HCT116 (cell line): ENCODE measurements at regions of chr5 and their contacts with region 1.

Region 1: DNA sequence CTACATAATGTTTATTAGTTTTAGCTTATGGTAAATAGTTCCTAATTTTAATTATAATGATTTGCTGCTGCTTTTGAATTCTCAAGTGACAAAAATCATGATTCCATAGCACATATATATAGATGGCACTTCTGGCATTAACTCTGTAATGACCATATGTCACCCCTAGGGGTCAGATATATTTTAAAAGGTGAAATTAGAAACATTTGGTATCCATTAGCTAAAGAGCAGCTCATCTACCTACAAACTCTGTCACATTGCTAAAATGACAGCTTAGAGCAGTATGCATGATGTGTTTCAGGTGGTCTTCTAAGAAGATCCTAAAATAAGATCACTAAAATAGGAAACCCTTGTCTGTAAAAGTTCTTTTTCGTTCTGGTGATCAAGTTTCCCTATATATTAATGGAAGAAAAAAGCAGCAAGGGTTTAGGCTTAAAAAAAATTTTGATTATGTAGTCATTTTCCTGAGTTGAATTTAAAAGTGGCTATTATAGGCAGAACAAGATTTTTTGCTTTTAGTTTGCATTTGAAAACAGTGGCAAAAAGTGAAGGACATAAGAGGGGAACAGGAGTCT is 157.7 kb upstream of the POU5F2 start:
- DNase-seq: no peak
- ATAC-seq: peak; percentile 69
- H3K4me3 ChIP-seq: no peak overlapping the region
- H3K27ac ChIP-seq: no peak overlapping the region
- H3K4me1 ChIP-seq: no peaks in the 10 kb centered on the region
- H3K27me3 ChIP-seq: no peaks in the 10 kb centered on the region
- CTCF ChIP-seq: peak; percentile 21 to 67 (median 42); a peak in 4 of 6 replicates
- POLR2A ChIP-seq: no peak
- RAD21 ChIP-seq: peak; percentile 27; the same call in 1 of the 2 replicates

Region 2: DNA sequence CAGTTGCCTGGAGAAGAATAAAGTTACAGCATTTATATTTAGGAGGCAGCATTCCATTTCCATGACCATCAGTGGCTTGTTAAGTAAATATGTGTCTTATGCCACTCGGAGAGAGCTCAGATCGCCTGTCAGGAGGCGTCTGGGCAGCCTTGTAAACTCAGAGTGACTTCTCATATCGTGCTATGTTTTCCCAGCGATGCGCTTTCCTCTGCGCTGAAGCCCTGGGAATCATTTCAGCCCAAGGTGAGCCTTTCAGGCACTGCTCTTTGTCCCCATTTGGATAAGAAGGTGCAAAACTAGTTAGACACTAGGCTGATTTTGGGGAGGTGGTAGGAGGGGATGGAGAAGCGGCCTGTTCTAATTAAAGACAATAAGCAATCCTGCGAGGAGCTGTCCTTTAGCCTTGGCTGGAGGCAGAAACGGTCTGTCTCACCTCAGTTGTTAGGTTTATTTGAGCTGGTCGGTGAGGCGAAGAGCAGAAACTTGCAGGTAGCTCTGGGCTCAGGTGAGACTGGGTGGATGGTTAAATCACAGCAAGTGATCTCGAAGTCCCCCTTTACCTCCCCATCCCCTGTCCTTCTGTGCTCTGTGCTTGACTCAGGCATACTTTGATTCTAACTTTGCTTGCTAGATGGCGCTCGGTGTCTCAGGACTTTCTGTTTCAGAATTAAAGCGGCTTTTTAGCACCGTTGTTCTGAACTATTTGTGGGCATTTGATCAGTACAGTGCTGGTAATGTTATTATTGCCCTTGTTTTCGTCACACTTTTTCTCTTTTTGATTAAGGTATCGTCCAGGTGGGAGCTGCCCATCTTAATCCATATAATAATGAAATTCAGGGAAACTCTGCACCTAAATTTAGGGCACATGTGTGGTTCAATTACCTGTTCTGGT is 291.5 kb before region 1 on chr5:
- CTCF ChIA-PET with region 1: no interaction called
- POLR2A ChIA-PET with region 1: no interaction called
- RAD21 ChIA-PET with region 1: no interaction called
- intact Hi-C with region 1: loop called (anchors 10 kb)
- DNase-seq: no peak
- ATAC-seq: peak; percentile 83
- H3K4me3 ChIP-seq: no peak overlapping the region
- H3K27ac ChIP-seq: no peak overlapping the region
- H3K4me1 ChIP-seq: peaks cover 14 to 18% of the 10 kb centered on the region in 2 experiments; a peak in 2 of 4 replicates
- H3K27me3 ChIP-seq: peaks cover 54% of the 10 kb centered on the region
- CTCF ChIP-seq: peak; percentile 55 to 78 (median 67)
- POLR2A ChIP-seq: no peak
- RAD21 ChIP-seq: peak; percentile 77

Region 3: GRCh38 chr5:93883459-93883858 is 15.7 kb before region 1 on chr5:
- CTCF ChIA-PET with region 1: interaction called, 16 read pairs
- POLR2A ChIA-PET with region 1: no interaction called
- RAD21 ChIA-PET with region 1: no interaction called
- intact Hi-C with region 1: no loop called
- DNase-seq: no peak
- ATAC-seq: no peak
- H3K4me3 ChIP-seq: no peak overlapping the region
- H3K27ac ChIP-seq: no peak overlapping the region
- H3K4me1 ChIP-seq: peaks cover 5 to 7% of the 10 kb centered on the region in 2 experiments; a peak in 3 of 4 replicates
- H3K27me3 ChIP-seq: no peaks in the 10 kb centered on the region
- CTCF ChIP-seq: no peak
- POLR2A ChIP-seq: no peak
- RAD21 ChIP-seq: no peak

Region 4: GRCh38 chr5:93909356-93909755 is 10.2 kb after region 1 on chr5:
- CTCF ChIA-PET with region 1: interaction called, 15 read pairs
- POLR2A ChIA-PET with region 1: no interaction called
- RAD21 ChIA-PET with region 1: no interaction called
- intact Hi-C with region 1: no loop called
- DNase-seq: no peak
- ATAC-seq: no peak
- H3K4me3 ChIP-seq: no peak overlapping the region
- H3K27ac ChIP-seq: no peak overlapping the region
- H3K4me1 ChIP-seq: no peaks in the 10 kb centered on the region
- H3K27me3 ChIP-seq: no peaks in the 10 kb centered on the region
- CTCF ChIP-seq: peak; percentile 7 to 32 (median 10); a peak in 2 of 6 replicates
- POLR2A ChIP-seq: no peak
- RAD21 ChIP-seq: peak; percentile 38; the same call in 1 of the 2 replicates

Region 5: GRCh38 chr5:94057217-94057616 is 158.1 kb after region 1 on chr5:
- CTCF ChIA-PET with region 1: no interaction called
- POLR2A ChIA-PET with region 1: no interaction called
- RAD21 ChIA-PET with region 1: no interaction called
- intact Hi-C with region 1: no loop called
- DNase-seq: no peak
- ATAC-seq: no peak
- H3K4me3 ChIP-seq: no peak overlapping the region
- H3K27ac ChIP-seq: no peak overlapping the region
- H3K4me1 ChIP-seq: no peaks in the 10 kb centered on the region
- H3K27me3 ChIP-seq: no peaks in the 10 kb centered on the region
- CTCF ChIP-seq: no peak
- POLR2A ChIP-seq: no peak
- RAD21 ChIP-seq: no peak